GM10248 (cell line): ENCODE measurements at regions of chr1 and their contacts with region 1.

Region 1: GRCh38 chr1:155989242-155990004 is 11.1 kb upstream of the ARHGEF2 start:
- DNase-seq: peak; percentile 84
- CTCF ChIP-seq: peak; percentile 99

Region 2: GRCh38 chr1:155706091-155706619 is 283.3 kb before region 1 on chr1:
- CTCF ChIA-PET with region 1: no interaction called
- POLR2A ChIA-PET with region 1: no interaction called
- DNase-seq: no peak
- CTCF ChIP-seq: no peak

Region 3: GRCh38 chr1:155911156-155912055 is 78.0 kb before region 1 on chr1 and contains the start of gene RIT1:
- CTCF ChIA-PET with region 1: interaction called, 12 read pairs
- POLR2A ChIA-PET with region 1: no interaction called
- DNase-seq: peak; percentile 93
- CTCF ChIP-seq: no peak

Region 4: DNA sequence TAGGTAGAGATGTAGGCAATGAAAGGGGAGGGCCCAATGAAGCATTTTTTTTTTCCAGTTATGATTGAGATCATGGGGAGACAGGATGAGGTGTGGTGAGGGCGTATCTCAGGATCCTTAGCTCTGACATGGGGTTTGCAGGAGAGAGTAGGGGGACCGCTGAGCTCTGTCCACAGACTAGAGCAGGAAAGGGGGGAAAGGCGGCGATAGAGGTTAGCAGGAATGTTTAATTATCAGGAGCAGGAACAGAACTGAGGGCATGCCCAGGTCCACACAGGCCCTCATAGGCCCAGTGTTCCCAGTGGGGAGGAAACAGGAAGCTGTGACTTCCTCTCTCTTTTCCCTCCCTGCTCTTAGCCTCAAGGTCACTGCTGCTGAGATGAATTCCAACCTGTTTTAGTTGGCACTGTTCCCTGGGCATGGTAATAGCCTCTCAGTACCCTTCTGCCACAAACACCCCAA is 48.9 kb before region 1 on chr1:
- CTCF ChIA-PET with region 1: interaction called, 69 read pairs
- POLR2A ChIA-PET with region 1: interaction called, 3 read pairs
- DNase-seq: no peak
- CTCF ChIP-seq: no peak

Region 5: DNA sequence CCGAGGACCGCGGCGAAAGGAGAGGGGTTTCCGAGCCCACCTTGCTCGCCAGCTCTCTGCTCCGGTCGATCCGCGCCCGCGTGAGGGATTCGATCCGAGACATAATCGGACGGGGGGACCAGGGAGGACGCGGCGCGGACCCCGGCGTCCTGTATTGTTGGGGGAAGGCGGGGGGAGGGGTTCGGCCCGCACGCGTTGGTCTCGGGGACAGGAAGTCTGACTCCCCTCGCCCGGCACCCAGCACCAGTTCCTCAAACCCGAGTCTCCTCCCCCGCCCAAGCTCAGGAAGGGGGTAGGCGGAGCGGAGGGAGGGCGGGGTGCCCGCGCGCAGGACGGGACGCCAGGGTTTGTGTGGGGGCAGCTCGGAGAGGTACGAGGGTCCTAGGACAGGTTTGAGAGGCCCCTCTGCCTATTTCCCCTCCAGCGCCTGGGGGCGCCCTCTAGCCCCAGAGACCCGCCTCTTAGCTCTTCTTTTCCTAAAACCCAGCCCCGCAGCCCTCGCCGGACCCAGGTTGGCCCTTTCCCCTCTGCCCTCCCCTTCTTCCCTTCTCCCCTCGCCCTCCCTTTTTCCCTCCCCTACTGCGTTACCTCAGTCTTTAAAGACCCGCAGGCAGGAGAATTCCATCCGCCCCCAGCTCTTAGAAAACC is 11.0 kb before region 1 on chr1 and contains the start of gene ARHGEF2:
- CTCF ChIA-PET with region 1: interaction called, 215 read pairs
- POLR2A ChIA-PET with region 1: no interaction called
- DNase-seq: peak; percentile 90
- CTCF ChIP-seq: peak; percentile 33

Region 6: DNA sequence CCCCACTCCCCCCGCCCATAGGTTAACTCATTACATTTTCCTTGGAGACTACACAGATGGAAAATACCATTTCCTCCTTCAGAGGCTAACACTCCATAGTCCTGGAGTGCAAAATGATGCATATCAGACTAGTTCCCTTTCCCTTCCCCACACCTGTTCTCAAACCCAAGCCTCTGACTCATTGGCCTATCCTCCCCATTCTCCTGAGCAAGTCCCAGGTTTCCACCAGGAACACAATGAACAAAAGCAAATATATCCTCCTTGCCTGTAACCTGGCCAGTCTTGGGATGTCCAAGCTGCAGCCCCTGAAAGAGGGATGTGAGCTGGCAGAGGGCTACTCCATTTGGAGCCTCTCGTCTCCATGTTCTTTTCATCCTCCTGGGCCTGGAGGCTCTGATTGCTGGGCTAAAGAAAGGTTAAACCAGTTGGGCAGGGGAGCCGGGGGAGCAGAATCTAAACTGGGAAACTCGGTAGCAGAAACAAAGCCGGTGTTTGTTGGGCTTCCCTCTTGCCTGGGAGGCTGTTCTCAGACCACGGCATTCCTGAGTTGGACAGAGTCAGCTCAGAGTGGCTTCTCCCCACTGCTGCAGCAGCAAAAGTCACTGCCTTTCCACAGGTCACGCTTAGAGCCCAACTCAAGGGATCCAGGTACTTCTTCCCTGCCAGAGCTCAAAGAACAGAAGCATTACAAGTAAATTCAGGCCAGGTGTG is 17.4 kb after region 1 on chr1:
- CTCF ChIA-PET with region 1: interaction called, 13 read pairs
- POLR2A ChIA-PET with region 1: no interaction called
- DNase-seq: no peak
- CTCF ChIP-seq: no peak

Region 7: DNA sequence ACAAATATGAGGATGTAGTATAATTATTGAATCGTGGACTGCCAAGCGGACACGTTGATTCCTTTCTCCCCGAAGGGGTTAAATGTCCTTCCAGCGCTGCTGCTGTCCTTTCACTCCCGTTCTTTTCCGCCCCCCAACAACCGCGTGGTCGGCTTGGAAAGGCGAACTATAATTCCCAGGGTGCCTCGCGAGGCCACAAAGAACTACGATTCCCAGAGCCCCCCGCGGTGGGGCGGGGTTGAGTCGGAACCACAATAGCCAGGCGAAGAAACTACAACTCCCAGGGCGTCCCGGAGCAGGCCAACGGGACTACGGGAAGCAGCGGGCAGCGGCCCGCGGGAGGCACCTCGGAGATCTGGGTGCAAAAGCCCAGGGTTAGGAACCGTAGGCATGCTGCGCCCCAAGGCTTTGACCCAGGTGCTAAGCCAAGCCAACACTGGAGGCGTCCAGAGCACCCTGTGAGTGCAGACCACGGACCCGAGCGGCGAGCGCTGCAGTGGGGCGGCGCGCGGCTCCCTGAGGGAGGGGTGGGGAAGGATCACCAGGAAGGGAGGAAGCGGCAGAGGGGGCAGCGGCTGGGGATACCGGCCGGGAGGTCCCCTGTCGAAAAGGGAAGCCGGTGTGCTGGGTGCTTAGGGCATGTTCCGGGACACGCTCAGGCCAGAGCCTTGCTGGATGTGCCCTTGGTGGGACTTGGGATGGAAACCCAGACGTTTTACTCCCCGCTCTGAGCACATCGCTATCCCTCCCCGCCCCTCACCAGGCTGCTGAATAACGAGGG is 65.3 kb after region 1 on chr1 and contains the start of gene LAMTOR2:
- CTCF ChIA-PET with region 1: interaction called, 12 read pairs
- POLR2A ChIA-PET with region 1: no interaction called
- DNase-seq: peak; percentile 94
- CTCF ChIP-seq: no peak

Region 8: DNA sequence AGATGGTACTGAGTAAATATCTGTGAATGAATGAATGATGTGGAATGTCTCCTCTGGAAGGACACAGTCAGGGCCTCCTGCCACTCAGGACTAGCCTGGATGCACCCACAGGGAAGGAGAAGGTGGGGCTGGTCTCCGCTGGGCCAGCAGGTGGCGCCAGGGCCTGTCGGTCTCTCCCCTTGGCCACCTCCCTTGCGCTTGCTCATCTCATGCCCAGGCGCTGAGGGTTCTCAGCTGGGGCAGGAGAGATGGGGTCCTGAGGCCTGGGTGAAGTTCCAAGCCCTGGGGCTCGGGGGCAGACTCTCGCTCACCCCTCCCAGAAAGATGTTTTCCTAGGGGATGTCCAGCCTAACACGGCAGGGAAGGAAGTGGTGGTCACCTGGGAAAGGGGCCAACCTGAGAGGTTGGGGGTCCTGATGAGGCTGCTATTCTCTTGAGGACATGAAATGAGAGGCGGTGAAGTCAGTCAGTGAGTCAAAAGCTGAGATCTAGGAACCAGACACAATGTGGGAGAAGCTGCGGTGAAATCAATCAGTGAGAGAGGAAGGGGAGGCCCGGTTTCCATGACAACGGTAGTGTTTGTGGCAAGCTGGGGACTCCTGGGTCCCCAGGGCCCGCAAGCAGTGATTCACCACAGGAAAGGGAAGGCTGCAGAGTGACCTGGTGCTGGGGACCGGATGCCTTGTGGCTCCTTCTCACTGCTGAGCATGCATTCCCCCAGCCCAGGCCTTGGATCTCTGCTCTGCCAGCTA is 107.4 kb after region 1 on chr1:
- CTCF ChIA-PET with region 1: no interaction called
- POLR2A ChIA-PET with region 1: no interaction called
- DNase-seq: peak; percentile 84
- CTCF ChIP-seq: peak; percentile 86

Region 9: GRCh38 chr1:156212833-156213643 is 223.6 kb after region 1 on chr1 and contains the start of gene PMF1:
- CTCF ChIA-PET with region 1: no interaction called
- POLR2A ChIA-PET with region 1: no interaction called
- DNase-seq: peak; percentile 99
- CTCF ChIP-seq: no peak

Region 10: DNA sequence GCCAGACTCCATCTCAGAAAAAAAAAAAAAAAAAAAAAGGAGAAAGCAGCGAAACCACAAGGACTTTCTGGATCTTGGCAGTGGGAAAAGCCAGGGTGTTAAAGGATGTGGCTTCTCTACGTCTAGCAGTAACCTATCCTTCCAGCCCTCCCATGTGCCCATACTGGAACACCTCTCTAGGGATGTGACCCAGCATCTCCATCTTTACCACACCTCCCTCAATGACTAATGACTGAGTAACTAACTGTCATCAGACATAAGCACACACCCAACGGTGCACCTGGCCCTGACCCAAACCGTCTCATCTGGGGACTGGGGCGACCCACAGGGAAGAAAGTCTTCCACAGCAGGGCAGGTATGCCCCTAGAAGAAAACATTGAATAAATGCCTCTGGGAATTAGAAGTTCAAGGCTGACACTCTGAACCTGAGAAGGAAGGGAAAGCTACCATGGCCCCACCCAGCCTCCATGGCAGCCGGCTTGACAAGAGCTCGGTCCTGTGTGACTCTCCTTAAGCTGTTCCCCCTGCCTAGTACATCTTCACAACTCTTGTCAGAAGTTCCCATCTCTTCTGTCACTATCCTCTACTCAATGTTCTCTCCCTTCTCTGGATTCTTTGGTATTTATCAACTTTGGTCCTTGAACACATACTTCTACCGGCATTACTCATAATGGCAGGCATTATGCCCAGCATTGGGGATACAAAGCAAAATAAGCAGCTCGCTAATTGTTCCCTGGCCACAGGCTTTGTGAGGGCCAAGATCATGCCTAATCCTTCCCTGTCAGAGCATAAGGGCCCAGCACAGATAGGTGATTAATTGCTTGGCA is 273.3 kb after region 1 on chr1:
- CTCF ChIA-PET with region 1: no interaction called
- POLR2A ChIA-PET with region 1: no interaction called
- DNase-seq: no peak
- CTCF ChIP-seq: no peak